Activated CD4-positive, alpha-beta T cell treated with anti-CD3 and anti-CD28 coated beads for 36 hours (primary cell): ENCODE measurements at regions of chr15 and their contacts with region 1.

Region 1: GRCh38 chr15:92845126-92845508 is 55.0 kb upstream of the CHD2 start:
- DNase-seq: no peak
- ATAC-seq: peak; percentile 43
- H3K4me3 Mint-ChIP-seq: peak overlapping the region; percentile 57
- H3K27ac Mint-ChIP-seq: peak overlapping the region; percentile 99
- H3K4me1 Mint-ChIP-seq: peaks cover 79% of the 10 kb centered on the region
- H3K27me3 Mint-ChIP-seq: no peaks in the 10 kb centered on the region

Region 2: GRCh38 chr15:92820236-92821021 is 24.7 kb before region 1 on chr15:
- CTCF ChIA-PET with region 1: interaction called, 6 read pairs
- POLR2A ChIA-PET with region 1: interaction called, 10 read pairs
- intact Hi-C with region 1: no loop called
- DNase-seq: peak; percentile 92
- ATAC-seq: peak; percentile 63
- H3K4me3 Mint-ChIP-seq: peak overlapping the region; percentile 82
- H3K27ac Mint-ChIP-seq: peak overlapping the region; percentile 77
- H3K4me1 Mint-ChIP-seq: peaks cover 64% of the 10 kb centered on the region
- H3K27me3 Mint-ChIP-seq: no peaks in the 10 kb centered on the region

Region 3: DNA sequence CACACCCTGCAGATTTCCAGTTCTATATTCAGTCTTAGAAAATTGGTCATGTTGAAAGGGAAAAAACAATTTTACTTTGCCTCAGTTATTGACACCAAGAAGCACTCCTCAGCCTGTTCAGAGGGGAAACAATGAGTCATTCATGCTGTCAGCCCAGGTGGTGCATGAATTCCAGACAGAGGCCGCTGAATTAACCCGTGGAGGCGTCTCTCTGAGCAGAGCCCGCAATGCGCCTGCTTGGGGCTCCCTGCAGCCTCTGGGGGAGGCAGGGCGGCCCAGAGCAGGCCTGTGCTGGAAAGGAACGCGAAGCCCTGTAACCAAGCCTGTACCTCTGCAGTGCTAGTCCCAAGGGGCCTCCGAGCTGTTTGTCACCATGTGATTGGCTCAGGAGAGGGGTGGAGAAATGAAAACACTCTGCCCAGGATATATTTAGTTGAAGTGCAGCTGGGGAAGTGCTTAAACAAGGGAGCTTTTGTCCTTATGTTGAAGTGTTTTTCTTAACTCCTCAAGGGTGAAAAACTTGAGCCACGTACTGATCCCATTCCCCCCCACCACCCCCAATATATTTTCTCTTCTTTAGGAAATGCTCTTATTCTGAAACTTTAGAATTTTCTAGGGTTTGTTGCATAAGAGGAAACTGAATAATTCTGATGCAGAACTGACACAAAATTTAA is 13.3 kb before region 1 on chr15:
- CTCF ChIA-PET with region 1: interaction called, 3 read pairs
- POLR2A ChIA-PET with region 1: interaction called, 5 read pairs
- intact Hi-C with region 1: loop called (anchors 1 kb)
- DNase-seq: peak; percentile 96
- ATAC-seq: peak; percentile 95
- H3K4me3 Mint-ChIP-seq: peak overlapping the region; percentile 65
- H3K27ac Mint-ChIP-seq: peak overlapping the region; percentile 96
- H3K4me1 Mint-ChIP-seq: peaks cover 58% of the 10 kb centered on the region
- H3K27me3 Mint-ChIP-seq: no peaks in the 10 kb centered on the region